ENCODE measurements at regions of chr16 and their contacts with region 1.

Region 1: DNA sequence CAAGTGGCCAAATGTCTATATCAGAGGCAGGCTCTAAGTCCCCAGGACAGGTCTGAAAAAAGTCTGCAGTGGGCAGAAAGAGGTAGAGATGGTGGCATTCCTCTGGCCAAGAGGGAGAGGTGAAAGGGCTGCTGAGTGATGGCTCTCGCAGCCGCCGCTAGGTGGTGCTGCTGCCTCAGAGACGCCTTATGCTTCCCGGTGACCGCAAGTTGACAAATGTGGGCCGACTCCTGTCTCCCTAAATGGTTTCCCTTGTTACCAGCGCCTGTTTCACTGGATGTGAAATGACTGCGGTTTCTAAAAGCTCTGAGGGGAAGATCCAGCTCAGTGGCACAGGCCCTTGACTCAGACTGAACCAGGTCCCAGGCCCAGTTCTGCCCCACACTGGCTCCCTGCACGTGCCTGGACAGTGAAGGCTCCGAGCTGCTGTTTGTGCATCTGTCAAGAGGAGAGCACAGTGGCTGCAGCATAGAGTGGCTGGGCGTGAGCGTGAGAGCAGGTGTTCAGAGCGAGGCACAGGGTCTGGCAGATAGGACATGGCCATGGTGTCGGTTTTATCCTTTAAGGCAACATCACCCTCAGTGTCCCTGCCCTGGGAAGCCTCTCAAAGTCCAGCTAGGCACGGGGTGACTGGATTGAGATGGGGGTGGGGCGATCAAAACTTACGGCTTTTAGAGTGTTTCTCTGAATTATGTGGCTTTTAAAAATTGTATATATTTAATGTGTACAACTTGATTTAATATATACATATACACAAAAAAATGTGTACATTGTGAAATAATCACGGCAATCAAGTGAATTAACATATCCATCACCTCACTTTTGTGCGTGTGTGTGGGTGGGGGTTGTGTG is 19.9 kb downstream of the CLEC16A start:
- DNase-seq: peak in 1 of 2 experiments; percentile 89
- H3K4me3 ChIP-seq: no peak overlapping the region
- H3K27ac ChIP-seq: no peak overlapping the region
- H3K4me1 ChIP-seq: peaks cover 0 to 4% (median 2%) of the 10 kb centered on the region in 4 experiments; a peak in 4 of 7 replicates
- H3K27me3 ChIP-seq: no peaks in the 10 kb centered on the region
- CTCF ChIP-seq: peak; percentile 86 to 98 (median 98)
- EP300 ChIP-seq: no peak
- POLR2A ChIP-seq: no peak
- RAD21 ChIP-seq: peak; percentile 92 to 94

Region 2: DNA sequence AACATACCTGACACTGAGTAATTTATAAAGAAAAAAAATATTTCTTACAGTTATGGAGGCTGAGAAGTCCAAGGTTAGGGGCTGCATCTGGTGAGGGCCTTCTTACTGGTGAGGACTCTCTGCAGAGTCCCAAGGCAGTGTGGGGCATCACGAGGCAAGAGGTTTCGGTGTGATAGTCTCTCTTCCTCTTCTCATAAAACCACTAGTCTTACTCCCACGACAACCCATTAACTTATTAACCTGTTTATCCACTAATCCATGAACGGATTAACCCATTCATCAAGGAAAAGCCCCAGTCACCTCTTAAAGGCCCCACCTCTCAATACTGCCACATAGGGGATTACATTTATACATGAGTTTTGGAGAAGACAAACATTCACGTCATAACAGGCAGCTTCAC is 67.1 kb before region 1 on chr16:
- CTCF ChIA-PET with region 1: no interaction called
- POLR2A ChIA-PET with region 1: no interaction called
- DNase-seq: no peak
- H3K4me3 ChIP-seq: no peak overlapping the region
- H3K27ac ChIP-seq: no peak overlapping the region
- H3K4me1 ChIP-seq: peaks cover 0 to 6% (median 0%) of the 10 kb centered on the region in 4 experiments; a peak in 2 of 7 replicates
- H3K27me3 ChIP-seq: no peaks in the 10 kb centered on the region; a peak in 1 of 7 replicates
- CTCF ChIP-seq: no peak
- EP300 ChIP-seq: no peak
- POLR2A ChIP-seq: no peak
- RAD21 ChIP-seq: no peak

Region 3: DNA sequence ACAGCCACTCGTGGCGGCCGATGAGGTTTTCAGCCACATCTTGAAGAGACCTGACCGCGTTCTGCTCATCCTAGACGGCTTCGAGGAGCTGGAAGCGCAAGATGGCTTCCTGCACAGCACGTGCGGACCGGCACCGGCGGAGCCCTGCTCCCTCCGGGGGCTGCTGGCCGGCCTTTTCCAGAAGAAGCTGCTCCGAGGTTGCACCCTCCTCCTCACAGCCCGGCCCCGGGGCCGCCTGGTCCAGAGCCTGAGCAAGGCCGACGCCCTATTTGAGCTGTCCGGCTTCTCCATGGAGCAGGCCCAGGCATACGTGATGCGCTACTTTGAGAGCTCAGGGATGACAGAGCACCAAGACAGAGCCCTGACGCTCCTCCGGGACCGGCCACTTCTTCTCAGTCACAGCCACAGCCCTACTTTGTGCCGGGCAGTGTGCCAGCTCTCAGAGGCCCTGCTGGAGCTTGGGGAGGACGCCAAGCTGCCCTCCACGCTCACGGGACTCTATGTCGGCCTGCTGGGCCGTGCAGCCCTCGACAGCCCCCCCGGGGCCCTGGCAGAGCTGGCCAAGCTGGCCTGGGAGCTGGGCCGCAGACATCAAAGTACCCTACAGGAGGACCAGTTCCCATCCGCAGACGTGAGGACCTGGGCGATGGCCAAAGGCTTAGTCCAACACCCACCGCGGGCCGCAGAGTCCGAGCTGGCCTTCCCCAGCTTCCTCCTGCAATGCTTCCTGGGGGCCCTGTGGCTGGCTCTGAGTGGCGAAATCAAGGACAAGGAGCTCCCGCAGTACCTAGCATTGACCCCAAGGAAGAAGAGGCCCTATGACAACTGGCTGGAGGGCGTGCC is 57.1 kb before region 1 on chr16:
- CTCF ChIA-PET with region 1: no interaction called
- POLR2A ChIA-PET with region 1: no interaction called
- DNase-seq: no peak
- H3K4me3 ChIP-seq: no peak overlapping the region
- H3K27ac ChIP-seq: no peak overlapping the region
- H3K4me1 ChIP-seq: no peaks in the 10 kb centered on the region
- H3K27me3 ChIP-seq: no peaks in the 10 kb centered on the region; a peak in 1 of 7 replicates
- CTCF ChIP-seq: no peak
- EP300 ChIP-seq: no peak
- POLR2A ChIP-seq: no peak
- RAD21 ChIP-seq: no peak

Region 4: GRCh38 chr16:10949370-10949970 is 14.8 kb before region 1 on chr16:
- CTCF ChIA-PET with region 1: interaction called, 117 read pairs
- POLR2A ChIA-PET with region 1: interaction called, 11 read pairs
- DNase-seq: peak; percentile 46 to 63
- H3K4me3 ChIP-seq: no peak overlapping the region
- H3K27ac ChIP-seq: no peak overlapping the region
- H3K4me1 ChIP-seq: peaks cover 20 to 39% (median 27%) of the 10 kb centered on the region in 4 experiments
- H3K27me3 ChIP-seq: no peaks in the 10 kb centered on the region
- CTCF ChIP-seq: peak; percentile 31 to 58 (median 50); a peak in 3 of 4 replicates
- EP300 ChIP-seq: no peak
- POLR2A ChIP-seq: 0 out of 3 replicates have a peak, but pooled peaks of 1 of the 2 experiments have one; percentile 16
- RAD21 ChIP-seq: peak; percentile 18 to 24; a peak in 2 of 4 replicates

Region 5: DNA sequence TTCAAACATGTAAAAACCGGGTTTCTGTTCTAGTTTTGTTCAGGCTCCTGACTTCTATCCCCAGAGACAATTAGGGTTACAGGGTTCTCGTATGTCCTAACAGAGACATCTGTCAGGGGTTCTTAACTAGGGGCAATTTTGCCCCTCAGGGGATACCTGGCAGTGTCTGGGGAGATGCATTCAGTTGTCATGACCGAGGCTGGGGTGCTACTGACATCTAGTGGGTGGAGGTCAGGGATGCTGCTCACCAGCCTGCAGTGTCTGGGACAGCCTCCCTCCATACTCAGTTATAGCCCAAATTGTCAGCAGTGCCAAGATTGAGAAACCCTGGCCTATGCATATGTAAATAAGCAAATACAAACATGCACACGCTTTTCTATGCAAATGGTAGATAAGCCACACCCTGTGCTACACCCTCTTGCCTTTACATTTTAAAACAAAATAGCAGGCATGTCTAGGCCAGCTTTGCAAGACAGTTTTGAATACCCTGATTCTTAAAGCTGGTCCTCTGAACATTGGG is 17.5 kb after region 1 on chr16:
- CTCF ChIA-PET with region 1: interaction called, 67 read pairs
- POLR2A ChIA-PET with region 1: no interaction called
- DNase-seq: peak in 1 of 2 experiments; percentile 69
- H3K4me3 ChIP-seq: no peak overlapping the region
- H3K27ac ChIP-seq: no peak overlapping the region
- H3K4me1 ChIP-seq: 0 out of 7 replicates have a peak, but pooled peaks cover 0 to 2% (median 0%) of the 10 kb centered on the region in 4 experiments
- H3K27me3 ChIP-seq: no peaks in the 10 kb centered on the region
- CTCF ChIP-seq: peak; percentile 75 to 94 (median 86)
- EP300 ChIP-seq: no peak
- POLR2A ChIP-seq: no peak
- RAD21 ChIP-seq: peak; percentile 52 to 66

Region 6: GRCh38 chr16:11049380-11050059 is 85.3 kb after region 1 on chr16:
- CTCF ChIA-PET with region 1: interaction called, 14 read pairs
- POLR2A ChIA-PET with region 1: no interaction called
- DNase-seq: peak in 1 of 2 experiments; percentile 38
- H3K4me3 ChIP-seq: no peak overlapping the region
- H3K27ac ChIP-seq: no peak overlapping the region
- H3K4me1 ChIP-seq: peaks cover 0 to 5% (median 4%) of the 10 kb centered on the region in 4 experiments; a peak in 4 of 7 replicates
- H3K27me3 ChIP-seq: no peaks in the 10 kb centered on the region
- CTCF ChIP-seq: no peak
- EP300 ChIP-seq: no peak
- POLR2A ChIP-seq: no peak
- RAD21 ChIP-seq: no peak

Region 7: DNA sequence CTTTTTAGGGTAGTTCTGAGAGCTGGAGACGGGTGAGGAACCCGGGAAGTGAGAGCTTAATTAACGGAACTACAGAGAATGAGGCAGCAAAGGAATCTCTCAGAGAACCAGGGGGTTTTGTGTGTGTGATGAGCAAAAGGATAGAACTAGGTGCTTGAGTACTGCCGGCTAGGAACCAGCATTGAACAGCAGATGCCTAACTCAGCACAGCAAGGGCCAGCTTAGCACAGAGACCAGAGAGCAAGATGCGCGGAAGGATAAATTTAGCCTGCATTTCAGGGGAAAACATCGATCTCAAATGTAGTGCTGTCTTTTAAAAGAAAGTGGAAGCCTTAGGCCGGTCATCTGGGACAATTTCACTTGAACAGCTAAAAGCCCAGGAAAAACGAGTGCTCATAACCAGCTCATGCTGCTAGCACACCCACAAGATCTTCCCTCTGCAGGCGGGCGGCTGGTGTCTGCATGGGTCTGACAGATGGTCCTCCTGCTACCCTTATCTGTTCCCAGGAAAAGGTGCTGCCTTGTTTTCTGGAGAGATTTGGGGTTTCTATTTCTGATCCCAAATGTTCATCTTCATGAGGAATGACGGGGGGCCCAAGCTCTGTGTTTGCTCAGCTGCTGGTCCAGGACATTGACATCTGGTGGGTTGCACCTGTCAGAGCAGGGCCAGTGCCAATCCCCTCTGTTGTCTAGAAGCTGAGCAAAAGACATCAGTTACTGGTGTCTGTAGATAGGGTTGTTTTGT is 187.8 kb after region 1 on chr16:
- CTCF ChIA-PET with region 1: no interaction called
- POLR2A ChIA-PET with region 1: no interaction called
- DNase-seq: no peak
- H3K4me3 ChIP-seq: no peak overlapping the region
- H3K27ac ChIP-seq: no peak overlapping the region
- H3K4me1 ChIP-seq: no peaks in the 10 kb centered on the region
- H3K27me3 ChIP-seq: no peaks in the 10 kb centered on the region
- CTCF ChIP-seq: no peak
- EP300 ChIP-seq: no peak
- POLR2A ChIP-seq: no peak
- RAD21 ChIP-seq: no peak

Region 8: DNA sequence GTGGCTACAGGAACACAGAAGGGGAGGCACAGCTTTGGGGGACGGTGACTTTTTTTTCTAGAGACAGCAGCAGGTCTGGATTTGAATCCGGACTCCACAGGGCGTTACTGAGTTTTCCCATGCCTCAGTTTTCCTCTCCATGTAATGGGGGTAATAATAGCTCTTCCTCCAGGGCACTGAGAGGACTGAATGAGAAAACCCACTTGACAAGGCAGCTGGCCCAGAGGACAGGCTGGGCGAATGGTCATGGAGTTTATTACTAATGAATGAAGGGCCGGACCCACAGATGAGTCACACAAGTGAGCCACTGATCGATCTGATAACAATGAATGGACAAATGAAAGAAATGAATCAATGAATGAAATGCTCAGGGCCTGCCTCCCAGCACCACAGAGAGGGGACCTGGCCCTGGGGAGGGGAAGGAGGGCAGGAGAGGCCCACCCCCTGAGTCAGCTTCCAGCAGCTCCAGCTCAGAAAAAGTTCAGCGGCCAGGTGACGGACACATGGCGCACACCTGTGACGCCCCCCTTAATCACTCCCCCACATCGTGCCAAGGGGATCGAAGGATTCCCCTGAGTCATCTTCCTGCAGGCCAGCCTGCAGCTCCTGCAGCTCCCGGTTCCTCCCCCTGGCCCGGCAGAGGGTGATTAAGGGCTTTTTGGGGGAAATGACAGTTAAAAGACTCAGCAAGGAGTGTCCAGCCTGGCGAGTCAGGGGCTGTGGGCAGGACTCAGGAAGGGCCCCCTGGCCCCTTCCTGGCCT is 237.4 kb after region 1 on chr16:
- CTCF ChIA-PET with region 1: interaction called, 10 read pairs
- POLR2A ChIA-PET with region 1: no interaction called
- DNase-seq: peak in 1 of 2 experiments; percentile 65
- H3K4me3 ChIP-seq: peak overlapping the region in 1 of 4 experiments; percentile 14; a peak in 3 of 8 replicates
- H3K27ac ChIP-seq: no peak overlapping the region
- H3K4me1 ChIP-seq: peaks cover 7 to 30% (median 20%) of the 10 kb centered on the region in 4 experiments
- H3K27me3 ChIP-seq: no peaks in the 10 kb centered on the region; a peak in 1 of 7 replicates
- CTCF ChIP-seq: no peak
- EP300 ChIP-seq: no peak; a peak in 1 of 3 replicates
- POLR2A ChIP-seq: no peak
- RAD21 ChIP-seq: 0 out of 4 replicates have a peak, but pooled peaks of 1 of the 2 experiments have one; percentile 3

Region 9: GRCh38 chr16:11386791-11387546 is 422.7 kb after region 1 on chr16:
- CTCF ChIA-PET with region 1: interaction called, 10 read pairs
- POLR2A ChIA-PET with region 1: no interaction called
- DNase-seq: peak; percentile 41 to 92
- H3K4me3 ChIP-seq: no peak overlapping the region
- H3K27ac ChIP-seq: no peak overlapping the region
- H3K4me1 ChIP-seq: peaks cover 0 to 29% (median 14%) of the 10 kb centered on the region in 4 experiments; a peak in 5 of 7 replicates
- H3K27me3 ChIP-seq: no peaks in the 10 kb centered on the region
- CTCF ChIP-seq: peak; percentile 86 to 88 (median 86)
- EP300 ChIP-seq: no peak
- POLR2A ChIP-seq: no peak
- RAD21 ChIP-seq: peak; percentile 64 to 76

Measured in H1 (cell line).